ENCODE measurements at regions of chr6 and their contacts with region 1.

Region 1: GRCh38 chr6:83615025-83615999 is 93.6 kb downstream of the SNAP91 start:
- DNase-seq: peak; percentile 47
- ATAC-seq: peak; percentile 78
- H3K4me3 ChIP-seq: no peak overlapping the region
- H3K27ac ChIP-seq: no peak overlapping the region
- H3K4me1 ChIP-seq: no peaks in the 10 kb centered on the region
- H3K27me3 ChIP-seq: no peaks in the 10 kb centered on the region
- CTCF ChIP-seq: peak; percentile 59 to 70 (median 60); a peak in 5 of 6 replicates
- POLR2A ChIP-seq: no peak
- RAD21 ChIP-seq: peak; percentile 61

Region 2: DNA sequence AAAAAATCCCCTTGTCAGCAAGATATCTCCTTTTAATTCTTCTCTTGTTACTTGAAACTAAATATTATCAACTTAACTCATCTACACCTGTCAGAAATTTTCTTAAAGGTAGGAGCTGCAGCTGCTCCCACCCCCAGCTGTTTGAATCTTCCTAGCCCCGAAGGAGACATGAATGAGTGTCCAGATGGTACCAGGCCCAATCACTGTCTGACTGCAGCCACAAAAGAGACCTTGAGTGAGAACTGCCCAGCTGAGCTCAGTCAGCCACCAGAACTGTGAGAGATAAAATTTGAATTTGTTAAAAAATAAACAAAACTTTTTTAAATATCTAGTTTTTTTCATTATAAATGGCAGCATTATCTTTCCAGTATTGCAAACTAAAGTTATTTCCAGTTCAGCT is 18.3 kb before region 1 on chr6:
- CTCF ChIA-PET with region 1: interaction called, 21 read pairs
- POLR2A ChIA-PET with region 1: no interaction called
- RAD21 ChIA-PET with region 1: interaction called in 1 of 2 experiments, 3 read pairs
- intact Hi-C with region 1: no loop called
- DNase-seq: no peak
- ATAC-seq: no peak
- H3K4me3 ChIP-seq: no peak overlapping the region
- H3K27ac ChIP-seq: no peak overlapping the region
- H3K4me1 ChIP-seq: no peaks in the 10 kb centered on the region
- H3K27me3 ChIP-seq: no peaks in the 10 kb centered on the region
- CTCF ChIP-seq: no peak
- POLR2A ChIP-seq: no peak
- RAD21 ChIP-seq: no peak

Region 3: DNA sequence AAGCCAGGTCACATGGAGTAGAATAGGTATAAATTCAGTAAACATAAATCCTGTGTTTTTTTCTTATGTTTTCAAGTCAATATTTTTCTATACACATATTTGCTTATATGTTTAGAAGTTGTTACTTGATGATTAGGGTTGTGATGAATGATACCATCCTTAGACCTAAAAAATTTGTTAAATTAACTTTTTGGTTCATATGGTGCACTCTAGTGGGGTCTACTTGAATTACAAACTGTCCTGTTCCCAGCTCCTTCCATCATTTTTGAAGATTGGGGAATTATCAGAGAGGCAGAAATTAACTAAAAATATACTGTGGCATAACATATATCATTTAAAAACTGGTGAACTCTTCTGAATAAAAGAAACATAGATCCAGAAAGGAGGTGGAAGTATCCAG is 189.6 kb after region 1 on chr6:
- CTCF ChIA-PET with region 1: interaction called, 32 read pairs
- POLR2A ChIA-PET with region 1: interaction called, 3 read pairs
- RAD21 ChIA-PET with region 1: interaction called, 3 to 6 read pairs
- intact Hi-C with region 1: loop called (anchors 5 kb)
- DNase-seq: no peak
- ATAC-seq: no peak
- H3K4me3 ChIP-seq: no peak overlapping the region
- H3K27ac ChIP-seq: no peak overlapping the region
- H3K4me1 ChIP-seq: no peaks in the 10 kb centered on the region
- H3K27me3 ChIP-seq: no peaks in the 10 kb centered on the region
- CTCF ChIP-seq: peak in 2 of 3 experiments; percentile 33 to 37; a peak in 2 of 6 replicates
- POLR2A ChIP-seq: no peak
- RAD21 ChIP-seq: peak; percentile 45; the same call in 1 of the 2 replicates

Region 4: GRCh38 chr6:83884523-83884922 is 269.2 kb after region 1 on chr6:
- CTCF ChIA-PET with region 1: interaction called, 11 read pairs
- POLR2A ChIA-PET with region 1: no interaction called
- RAD21 ChIA-PET with region 1: no interaction called
- intact Hi-C with region 1: no loop called
- DNase-seq: peak; percentile 42
- ATAC-seq: peak; percentile 76
- H3K4me3 ChIP-seq: no peak overlapping the region
- H3K27ac ChIP-seq: no peak overlapping the region
- H3K4me1 ChIP-seq: no peaks in the 10 kb centered on the region
- H3K27me3 ChIP-seq: no peaks in the 10 kb centered on the region
- CTCF ChIP-seq: peak; percentile 46 to 79 (median 72); a peak in 5 of 6 replicates
- POLR2A ChIP-seq: no peak
- RAD21 ChIP-seq: peak; percentile 89

Region 5: DNA sequence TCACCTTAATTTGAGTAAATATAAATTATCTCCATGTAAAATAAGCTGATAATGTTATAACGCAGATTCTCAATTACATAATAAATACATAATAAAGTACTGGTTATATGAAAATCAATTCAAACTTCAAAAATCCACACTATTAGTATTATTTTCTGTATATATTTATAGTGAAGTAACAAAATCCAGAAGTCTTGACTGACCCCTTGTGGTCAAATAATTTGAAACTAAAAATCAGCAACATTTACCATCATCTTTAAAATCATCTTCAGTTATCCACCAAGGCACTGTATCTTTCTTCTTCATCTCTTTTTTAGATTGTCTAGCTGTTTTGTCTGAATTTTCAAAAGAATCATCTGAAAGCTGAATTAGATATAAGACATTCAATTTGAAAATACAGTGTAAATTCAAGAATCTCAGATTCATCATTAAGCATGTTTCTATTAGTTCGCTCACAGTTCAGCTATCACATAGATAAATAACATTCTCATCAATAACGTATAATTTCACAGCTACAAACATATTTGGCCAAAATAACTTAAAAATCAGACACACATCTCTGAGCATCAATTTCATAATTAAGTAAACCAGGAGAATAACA is 605.6 kb after region 1 on chr6:
- CTCF ChIA-PET with region 1: interaction called, 13 read pairs
- POLR2A ChIA-PET with region 1: no interaction called
- RAD21 ChIA-PET with region 1: no interaction called
- intact Hi-C with region 1: loop called (anchors 5 kb)
- DNase-seq: peak; percentile 10
- ATAC-seq: no peak
- H3K4me3 ChIP-seq: no peak overlapping the region
- H3K27ac ChIP-seq: no peak overlapping the region
- H3K4me1 ChIP-seq: no peaks in the 10 kb centered on the region
- H3K27me3 ChIP-seq: no peaks in the 10 kb centered on the region
- CTCF ChIP-seq: peak; percentile 22 to 60 (median 59); a peak in 4 of 6 replicates
- POLR2A ChIP-seq: no peak
- RAD21 ChIP-seq: peak; percentile 73

Region 6: DNA sequence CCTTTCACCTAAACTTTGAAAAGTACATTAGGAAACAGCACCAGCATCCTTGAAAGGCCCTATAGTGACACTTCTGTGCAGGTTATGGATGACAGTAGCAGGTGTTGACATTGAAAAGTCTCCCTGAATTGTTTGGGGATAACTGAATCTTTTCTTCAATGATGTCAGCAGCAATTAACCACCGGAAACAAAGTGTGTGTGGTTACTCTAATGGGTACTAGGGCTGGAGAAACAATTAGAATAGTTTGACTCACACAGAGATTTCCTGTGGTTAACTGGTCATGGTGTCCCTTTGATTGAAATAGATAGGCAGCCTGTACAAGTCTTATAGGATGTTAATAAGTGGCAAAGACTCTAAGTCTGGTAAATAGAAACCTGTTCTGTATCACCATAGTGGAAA is 960.0 kb after region 1 on chr6:
- CTCF ChIA-PET with region 1: no interaction called
- POLR2A ChIA-PET with region 1: no interaction called
- RAD21 ChIA-PET with region 1: no interaction called
- intact Hi-C with region 1: no loop called
- DNase-seq: no peak
- ATAC-seq: no peak
- H3K4me3 ChIP-seq: no peak overlapping the region
- H3K27ac ChIP-seq: no peak overlapping the region
- H3K4me1 ChIP-seq: no peaks in the 10 kb centered on the region
- H3K27me3 ChIP-seq: no peaks in the 10 kb centered on the region
- CTCF ChIP-seq: no peak
- POLR2A ChIP-seq: no peak
- RAD21 ChIP-seq: no peak

Region 7: GRCh38 chr6:85468261-85468660 is 1852.9 kb after region 1 on chr6:
- CTCF ChIA-PET with region 1: no interaction called
- POLR2A ChIA-PET with region 1: no interaction called
- RAD21 ChIA-PET with region 1: no interaction called
- intact Hi-C with region 1: no loop called
- DNase-seq: no peak
- ATAC-seq: no peak
- H3K4me3 ChIP-seq: no peak overlapping the region
- H3K27ac ChIP-seq: no peak overlapping the region
- H3K4me1 ChIP-seq: peaks cover 34 to 86% of the 10 kb centered on the region in 2 experiments
- H3K27me3 ChIP-seq: no peaks in the 10 kb centered on the region
- CTCF ChIP-seq: no peak
- POLR2A ChIP-seq: no peak
- RAD21 ChIP-seq: no peak